K562 (cell line): ENCODE measurements at regions of chr19 and their contacts with region 1.

Region 1: DNA sequence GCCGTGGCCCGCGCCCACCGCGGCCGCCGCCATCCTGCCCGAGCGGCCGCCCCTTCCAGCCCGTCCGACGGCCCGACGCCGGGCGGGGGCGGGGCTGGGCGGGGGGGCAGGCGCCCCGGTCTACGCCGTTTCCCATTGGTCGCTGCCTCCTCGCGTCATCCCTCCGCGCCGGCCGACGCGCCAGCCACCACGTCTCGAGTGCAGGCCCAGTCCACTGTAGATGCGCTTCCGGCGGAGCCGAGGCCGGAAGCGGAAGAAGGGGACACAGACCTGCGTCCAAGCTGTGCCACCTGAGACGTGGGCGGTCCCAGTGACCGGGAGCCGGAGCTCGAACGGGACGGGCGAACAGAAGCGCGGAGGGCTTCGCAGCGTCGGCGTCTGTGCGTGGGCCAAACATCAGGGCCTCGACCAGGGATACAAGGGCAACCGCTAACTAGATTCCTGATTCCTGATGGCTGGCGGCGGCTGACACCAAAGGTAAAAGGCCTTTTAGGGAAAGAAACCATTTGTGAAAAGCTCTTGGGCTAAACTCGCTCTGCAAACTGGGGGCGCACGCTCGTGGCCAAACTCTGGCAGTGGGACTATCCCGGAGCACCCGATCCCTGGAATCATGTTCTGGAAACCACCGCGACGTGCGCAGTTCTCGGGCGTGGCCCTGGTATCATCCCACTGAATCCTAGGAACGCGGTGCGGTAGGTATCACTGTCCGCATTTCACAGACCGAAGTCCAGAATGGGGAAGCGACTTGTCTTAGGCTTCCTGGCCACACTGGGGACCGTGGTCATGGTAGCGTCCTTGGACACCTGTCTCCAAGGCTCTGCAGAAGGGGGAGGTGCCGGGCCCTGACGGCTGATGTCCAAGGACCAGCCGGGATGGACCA is at the start of gene SLC35E1:
- DNase-seq: peak; percentile 97 to 99 (median 98)
- ATAC-seq: peak; percentile 98
- H3K4me3 ChIP-seq: peak within 1 kb of the TSS; percentile 99
- H3K27ac ChIP-seq: peak within 1 kb of the TSS; percentile 88
- H3K4me1 ChIP-seq: peaks cover 22 to 34% of the 10 kb centered on the region in 2 experiments; a peak in 4 of 5 replicates
- H3K27me3 ChIP-seq: no peaks in the 10 kb centered on the region
- CTCF ChIP-seq: no peak
- EP300 ChIP-seq: peak; percentile 41; the same call in 1 of the 2 replicates
- POLR2A ChIP-seq: peak; percentile 79
- RAD21 ChIP-seq: no peak; a peak in 1 of 4 replicates
- polyA plus RNA-seq, gene SLC35E1: 15.0 to 16.1 TPM

Region 2: GRCh38 chr19:16542045-16542909 is 30.3 kb before region 1 on chr19 and contains the start of gene CHERP:
- CTCF ChIA-PET with region 1: no interaction called
- POLR2A ChIA-PET with region 1: interaction called, 3 read pairs
- in situ Hi-C with region 1: no loop called
- intact Hi-C with region 1: loop called (anchors 1 kb)
- DNase-seq: peak; percentile 94 to 97 (median 94)
- ATAC-seq: peak; percentile 93
- H3K4me3 ChIP-seq: peak within 1 kb of the TSS; percentile 91
- H3K27ac ChIP-seq: peak within 1 kb of the TSS; percentile 79
- H3K4me1 ChIP-seq: peaks cover 5 to 10% of the 10 kb centered on the region in 2 experiments; a peak in 4 of 5 replicates
- H3K27me3 ChIP-seq: no peaks in the 10 kb centered on the region; a peak in 1 of 5 replicates
- CTCF ChIP-seq: no peak
- EP300 ChIP-seq: no peak
- POLR2A ChIP-seq: peak; percentile 90
- RAD21 ChIP-seq: peak in 1 of 2 experiments; percentile 13; a peak in 1 of 4 replicates
- polyA plus RNA-seq, gene CHERP: 0.60 to 0.75 TPM

Region 3: DNA sequence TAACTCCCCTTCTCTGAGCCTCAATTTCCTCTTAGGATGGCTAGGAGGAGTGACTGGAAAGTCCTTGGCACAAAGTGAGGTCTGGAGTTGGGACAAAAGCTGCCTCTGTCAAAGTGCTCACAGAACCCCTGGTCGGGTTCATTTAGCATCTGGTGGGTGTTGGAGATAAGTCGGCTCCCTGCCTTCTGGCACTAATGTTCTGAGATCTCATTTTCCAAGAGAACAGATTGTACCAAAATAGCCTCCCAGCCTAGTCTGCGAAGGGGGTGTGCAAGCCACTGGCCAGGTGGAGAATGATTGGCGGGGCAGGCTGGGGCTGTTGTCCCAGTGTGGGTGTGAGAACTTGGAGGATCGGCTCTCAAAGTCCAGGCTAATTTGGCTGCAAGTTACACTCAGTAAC is 126.3 kb after region 1 on chr19:
- CTCF ChIA-PET with region 1: no interaction called
- POLR2A ChIA-PET with region 1: no interaction called
- in situ Hi-C with region 1: no loop called
- intact Hi-C with region 1: no loop called
- DNase-seq: no peak
- ATAC-seq: no peak
- H3K4me3 ChIP-seq: no peak overlapping the region
- H3K27ac ChIP-seq: no peak overlapping the region
- H3K4me1 ChIP-seq: no peaks in the 10 kb centered on the region; a peak in 1 of 5 replicates
- H3K27me3 ChIP-seq: peaks cover 8 to 19% of the 10 kb centered on the region in 2 experiments; a peak in 4 of 5 replicates
- CTCF ChIP-seq: no peak
- EP300 ChIP-seq: no peak
- POLR2A ChIP-seq: no peak
- RAD21 ChIP-seq: no peak

Region 4: DNA sequence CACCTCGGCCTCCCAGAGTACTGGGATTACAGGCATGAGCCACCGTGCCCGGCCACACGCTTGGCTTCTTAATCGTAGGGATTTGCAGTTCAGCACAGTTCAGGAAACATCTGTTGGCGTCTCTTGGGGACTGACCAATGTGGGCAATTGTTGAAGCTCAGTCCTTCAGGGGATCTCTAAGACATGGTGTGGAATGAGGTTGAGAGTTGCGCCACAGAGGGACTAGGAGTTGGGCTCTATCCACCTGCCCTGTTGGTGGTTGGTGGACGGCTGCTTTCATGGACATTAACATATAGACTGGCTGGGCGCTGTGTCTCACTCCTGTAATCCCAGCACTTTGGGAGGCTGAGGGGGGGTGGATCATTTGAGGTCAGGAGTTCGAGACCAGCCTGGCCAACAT is 219.4 kb after region 1 on chr19:
- CTCF ChIA-PET with region 1: no interaction called
- POLR2A ChIA-PET with region 1: no interaction called
- in situ Hi-C with region 1: no loop called
- intact Hi-C with region 1: no loop called
- DNase-seq: no peak
- ATAC-seq: no peak
- H3K4me3 ChIP-seq: no peak overlapping the region
- H3K27ac ChIP-seq: no peak overlapping the region
- H3K4me1 ChIP-seq: no peaks in the 10 kb centered on the region
- H3K27me3 ChIP-seq: peaks cover 3 to 21% of the 10 kb centered on the region in 2 experiments
- CTCF ChIP-seq: no peak
- EP300 ChIP-seq: no peak
- POLR2A ChIP-seq: no peak
- RAD21 ChIP-seq: no peak

Region 5: DNA sequence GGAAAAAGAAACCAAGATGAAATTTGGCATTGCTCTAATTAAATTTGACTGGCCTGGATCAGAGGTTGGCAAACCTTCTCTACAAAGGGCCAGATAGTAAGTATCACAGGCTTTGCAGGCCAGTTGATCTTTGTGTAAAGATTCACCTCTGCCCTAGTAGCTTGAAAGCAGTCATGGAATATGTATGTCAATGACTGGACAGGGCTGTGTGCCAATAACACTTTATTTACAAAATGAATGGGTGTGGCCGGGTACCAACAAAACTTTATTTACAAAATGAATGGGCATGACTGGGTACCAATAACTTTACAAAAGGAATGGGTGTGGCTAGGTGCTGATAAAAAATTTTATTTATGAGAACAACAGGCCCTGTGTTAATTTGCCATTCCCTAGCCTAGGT is 276.6 kb after region 1 on chr19:
- CTCF ChIA-PET with region 1: no interaction called
- POLR2A ChIA-PET with region 1: no interaction called
- in situ Hi-C with region 1: no loop called
- intact Hi-C with region 1: no loop called
- DNase-seq: no peak
- ATAC-seq: no peak
- H3K4me3 ChIP-seq: no peak overlapping the region
- H3K27ac ChIP-seq: no peak overlapping the region
- H3K4me1 ChIP-seq: peaks cover 0 to 6% of the 10 kb centered on the region in 2 experiments; a peak in 1 of 5 replicates
- H3K27me3 ChIP-seq: no peaks in the 10 kb centered on the region
- CTCF ChIP-seq: no peak
- EP300 ChIP-seq: no peak
- POLR2A ChIP-seq: no peak
- RAD21 ChIP-seq: no peak